Naive thymus-derived CD4-positive, alpha-beta T cell (primary cell): ENCODE measurements at regions of chr10 and their contacts with region 1.

Region 1: DNA sequence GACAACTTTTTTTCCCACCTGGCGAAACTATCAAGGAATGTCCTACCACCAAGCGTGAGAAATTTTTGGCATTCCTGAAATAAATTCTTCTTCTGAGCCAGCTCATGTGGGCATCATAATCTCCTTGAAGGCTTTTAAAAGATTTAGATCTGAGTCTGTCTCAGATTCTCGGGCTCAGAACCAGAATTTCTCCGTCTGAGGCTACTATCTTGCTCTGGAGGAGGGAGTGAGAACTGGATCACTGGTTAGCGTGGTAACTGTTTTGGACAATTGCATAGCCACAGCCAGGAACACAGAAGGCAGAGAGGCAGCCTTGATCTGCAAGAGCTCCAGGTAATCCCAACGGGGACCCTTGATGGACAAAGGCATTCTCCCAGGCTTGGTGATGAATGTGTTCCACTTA is 1.0 kb upstream of the PLAC9 start:
- DNase-seq: no peak
- ATAC-seq: no peak
- H3K4me3 ChIP-seq: no peak overlapping the region
- H3K4me3 Mint-ChIP-seq: peak overlapping the region in 1 of 10 donors; percentile 2
- H3K27ac ChIP-seq: no peak overlapping the region
- H3K27ac Mint-ChIP-seq: no peak overlapping the region
- H3K4me1 ChIP-seq: no peaks in the 10 kb centered on the region
- H3K4me1 Mint-ChIP-seq: peaks cover 0 to 7% (median 5%) of the 10 kb centered on the region in 7 donors
- H3K27me3 ChIP-seq: peaks cover 0 to 3% of the 10 kb centered on the region in 2 donors
- H3K27me3 Mint-ChIP-seq: peaks cover 27 to 45% (median 37%) of the 10 kb centered on the region in 5 donors

Region 2: GRCh38 chr10:80064120-80064886 is 67.2 kb before region 1 on chr10:
- CTCF ChIA-PET with region 1: no interaction called
- POLR2A ChIA-PET with region 1: no interaction called
- intact Hi-C with region 1: loop called in 1 of 2 experiments (anchors 2 kb)
- DNase-seq: no peak
- ATAC-seq: no peak
- H3K4me3 ChIP-seq: no peak overlapping the region
- H3K4me3 Mint-ChIP-seq: no peak overlapping the region
- H3K27ac ChIP-seq: no peak overlapping the region
- H3K27ac Mint-ChIP-seq: no peak overlapping the region
- H3K4me1 ChIP-seq: no peaks in the 10 kb centered on the region
- H3K4me1 Mint-ChIP-seq: no peaks in the 10 kb centered on the region
- H3K27me3 ChIP-seq: no peaks in the 10 kb centered on the region
- H3K27me3 Mint-ChIP-seq: peaks cover 0 to 5% (median 0%) of the 10 kb centered on the region in 5 donors